Activated CD4-positive, alpha-beta T cell treated with anti-CD3 and anti-CD28 coated beads, Interleukin-2, amount 10 ng/mL, durations not matched to agents 24 days and 14 days (primary cell): ENCODE measurements at regions of chr11 and their contacts with region 1.

Region 1: DNA sequence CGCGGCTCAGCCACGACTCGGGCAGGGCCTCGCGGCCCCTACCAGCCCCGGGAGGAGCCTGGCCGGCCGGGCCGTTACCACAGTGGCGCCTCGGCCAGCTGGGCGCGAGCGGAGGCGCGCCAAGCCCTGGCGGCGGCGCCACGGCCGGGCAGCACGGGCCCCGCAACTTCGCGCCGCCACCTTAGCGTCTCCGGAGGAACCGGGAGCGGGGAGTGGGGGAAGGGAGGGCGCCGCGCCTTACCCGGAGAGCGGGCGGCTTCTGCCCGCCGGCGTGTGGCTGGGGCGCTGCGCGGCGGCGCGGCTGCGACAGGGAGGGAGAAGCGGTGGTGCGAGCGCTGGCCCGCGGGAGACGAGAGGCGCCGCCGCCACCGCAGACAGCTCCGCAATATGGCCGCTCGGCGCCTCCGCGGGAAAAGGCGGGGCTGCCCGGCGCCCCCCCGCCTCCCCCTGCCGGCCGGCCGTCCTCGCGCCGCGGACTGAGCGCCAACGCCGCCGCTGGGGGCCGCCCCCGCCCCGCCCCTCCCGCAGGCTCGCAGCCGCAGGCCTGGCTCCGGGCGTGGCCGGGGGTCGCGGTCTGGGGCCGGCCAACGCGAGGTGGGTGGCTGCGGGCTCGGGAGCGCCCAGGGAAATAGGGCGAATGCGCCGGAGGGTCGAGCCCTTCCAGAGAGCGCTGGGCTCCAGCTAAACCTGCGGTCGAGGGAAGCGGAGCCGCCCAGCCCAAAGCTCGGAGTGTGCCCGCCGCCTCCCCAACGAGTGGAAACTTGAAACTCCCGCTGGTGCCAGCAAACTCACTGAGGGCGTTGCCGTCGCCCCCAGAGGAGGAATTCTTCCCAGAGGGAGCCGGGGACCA is at the start of gene RDX:
- DNase-seq: peak; percentile 90
- H3K4me3 Mint-ChIP-seq: peak within 1 kb of the TSS; percentile 97
- H3K27ac Mint-ChIP-seq: peak within 1 kb of the TSS; percentile 91
- H3K4me1 Mint-ChIP-seq: peaks cover 38% of the 10 kb centered on the region
- H3K27me3 Mint-ChIP-seq: no peaks in the 10 kb centered on the region
- total RNA-seq, gene RDX: 87.6 and 88.4 TPM in 2 replicates

Region 2: GRCh38 chr11:110098645-110099044 is 197.8 kb before region 1 on chr11:
- intact Hi-C with region 1: no loop called
- DNase-seq: no peak
- H3K4me3 Mint-ChIP-seq: no peak overlapping the region
- H3K27ac Mint-ChIP-seq: no peak overlapping the region
- H3K4me1 Mint-ChIP-seq: peaks cover 9% of the 10 kb centered on the region
- H3K27me3 Mint-ChIP-seq: peaks cover 33% of the 10 kb centered on the region

Region 3: GRCh38 chr11:110366291-110366690 is 69.8 kb after region 1 on chr11:
- intact Hi-C with region 1: no loop called
- DNase-seq: no peak
- H3K4me3 Mint-ChIP-seq: no peak overlapping the region
- H3K27ac Mint-ChIP-seq: no peak overlapping the region
- H3K4me1 Mint-ChIP-seq: peaks cover 14% of the 10 kb centered on the region
- H3K27me3 Mint-ChIP-seq: no peaks in the 10 kb centered on the region

Region 4: GRCh38 chr11:110429731-110430266 is 133.3 kb after region 1 on chr11 and contains the start of gene FDX1:
- intact Hi-C with region 1: loop called (anchors 1 kb)
- DNase-seq: peak; percentile 95
- H3K4me3 Mint-ChIP-seq: peak within 1 kb of the TSS; percentile 99
- H3K27ac Mint-ChIP-seq: peak within 1 kb of the TSS; percentile 98
- H3K4me1 Mint-ChIP-seq: peaks cover 39% of the 10 kb centered on the region
- H3K27me3 Mint-ChIP-seq: no peaks in the 10 kb centered on the region
- total RNA-seq, gene FDX1: 14.2 and 16.4 TPM in 2 replicates

Region 5: DNA sequence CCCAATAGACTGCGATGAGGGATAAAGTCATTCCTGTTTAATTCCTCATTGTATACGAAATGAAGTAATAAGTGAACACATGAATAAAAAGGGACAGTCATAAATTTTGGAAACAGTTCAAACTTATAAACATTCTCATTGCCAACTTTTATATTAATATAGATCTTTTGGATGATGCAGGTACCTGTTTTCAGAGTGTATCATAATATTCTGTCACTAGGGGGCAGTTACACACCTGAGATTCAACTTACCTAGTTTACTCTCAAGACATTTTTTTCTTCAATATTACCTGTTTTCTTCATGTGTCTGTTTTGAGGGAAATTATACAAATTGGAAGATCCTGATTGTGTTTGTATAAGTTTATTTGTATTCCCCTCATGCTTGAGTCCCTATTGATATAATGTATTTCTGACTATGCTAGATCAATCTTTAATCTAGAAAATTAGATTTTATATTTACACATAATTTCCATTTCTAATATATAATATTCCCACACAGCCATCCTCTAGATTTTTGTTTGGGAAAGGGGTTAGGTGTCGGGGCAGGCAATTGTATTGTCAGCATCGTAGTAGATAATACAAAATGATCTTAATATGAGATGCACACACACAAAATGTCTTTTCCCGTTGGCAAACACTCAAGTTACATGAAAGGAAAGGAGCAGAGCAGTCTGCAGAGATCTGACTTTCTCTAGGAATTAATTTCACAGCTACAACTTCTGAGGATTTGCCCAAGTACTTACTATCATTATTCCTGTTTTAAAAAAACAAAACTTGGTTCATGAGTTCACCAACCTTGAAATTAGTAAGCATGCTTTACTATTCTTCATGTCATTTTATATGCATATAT is 151.7 kb after region 1 on chr11:
- intact Hi-C with region 1: no loop called
- DNase-seq: no peak
- H3K4me3 Mint-ChIP-seq: no peak overlapping the region
- H3K27ac Mint-ChIP-seq: no peak overlapping the region
- H3K4me1 Mint-ChIP-seq: peaks cover 26% of the 10 kb centered on the region
- H3K27me3 Mint-ChIP-seq: no peaks in the 10 kb centered on the region

Region 6: DNA sequence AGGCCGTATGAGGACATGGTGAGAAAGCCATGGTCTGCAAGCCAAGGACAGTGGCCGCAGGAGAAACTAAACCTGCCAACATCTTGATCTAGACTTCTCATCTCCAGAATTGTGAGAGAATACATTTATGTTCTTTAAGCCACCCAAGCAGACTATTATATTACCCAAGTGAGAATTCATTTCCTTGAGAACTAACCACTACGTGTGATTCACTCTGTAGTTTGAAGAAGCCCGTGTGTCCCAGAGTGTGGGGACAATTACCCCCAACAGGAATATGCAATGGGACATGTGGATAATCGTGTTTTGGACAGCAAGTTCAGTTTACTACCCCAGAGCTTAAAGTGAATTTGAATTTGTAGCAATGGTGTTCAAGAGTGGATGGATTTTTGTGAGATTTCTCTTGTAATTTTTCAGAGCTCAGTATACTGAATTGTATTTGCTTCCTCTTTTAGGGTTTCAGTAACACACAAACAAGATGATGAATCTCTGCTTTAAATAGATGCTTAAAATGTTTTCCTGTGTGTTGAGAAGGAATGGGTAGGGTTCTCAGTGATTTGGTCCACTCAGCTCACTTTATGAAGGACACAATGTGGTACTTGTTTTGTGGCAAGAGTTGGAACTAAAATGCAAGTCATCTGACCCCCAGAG is 515.8 kb after region 1 on chr11:
- intact Hi-C with region 1: no loop called
- DNase-seq: no peak
- H3K4me3 Mint-ChIP-seq: no peak overlapping the region
- H3K27ac Mint-ChIP-seq: no peak overlapping the region
- H3K4me1 Mint-ChIP-seq: no peaks in the 10 kb centered on the region
- H3K27me3 Mint-ChIP-seq: no peaks in the 10 kb centered on the region